ENCODE measurements at regions of chr7 and their contacts with region 1.

Region 1: GRCh38 chr7:86939197-86939814 is 120.1 kb downstream of the ELAPOR2 start:
- DNase-seq: no peak
- CTCF ChIP-seq: peak; percentile 71

Region 2: DNA sequence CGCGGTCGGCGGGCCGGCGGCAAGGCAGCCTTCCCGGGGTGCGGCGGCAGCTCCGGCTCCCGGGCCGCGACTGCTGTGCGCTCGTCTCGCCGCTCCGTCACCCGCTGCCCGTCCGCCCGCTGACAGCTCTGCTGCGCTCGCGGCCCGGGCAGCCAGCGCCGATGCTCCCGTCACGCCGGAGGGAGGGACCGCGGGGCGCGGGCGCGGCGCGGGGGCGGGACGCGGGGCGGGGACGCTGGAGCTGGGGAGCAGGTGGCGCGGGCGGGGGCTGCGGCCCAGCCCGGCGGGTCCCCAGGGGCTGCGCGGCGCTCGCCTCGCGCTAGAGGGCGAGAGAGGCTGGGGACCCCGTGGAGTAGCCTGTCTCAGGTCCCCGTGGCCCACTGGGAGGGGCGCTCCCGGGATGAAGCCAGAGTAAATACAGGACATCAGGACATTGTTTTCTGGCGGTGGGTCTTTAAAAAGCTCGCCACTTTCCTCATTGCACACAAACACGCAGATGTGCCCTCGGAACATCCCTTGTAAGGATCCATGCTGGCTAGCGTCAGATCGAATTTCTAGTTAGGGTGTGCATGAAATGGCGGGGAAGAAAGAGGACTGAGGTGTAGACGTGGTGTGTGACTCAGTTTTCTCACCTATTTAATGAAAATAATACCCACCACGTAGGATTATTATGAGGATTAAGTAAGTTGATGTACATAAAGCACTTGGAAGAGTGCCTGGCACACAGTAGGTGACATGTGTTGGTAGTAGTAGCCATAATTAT is 120.4 kb after region 1 on chr7 and contains the start of gene ELAPOR2:
- in situ Hi-C with region 1: loop called (anchors 10 kb)
- DNase-seq: peak; percentile 91
- CTCF ChIP-seq: peak; percentile 87

Region 3: GRCh38 chr7:87148332-87148955 is 209.1 kb after region 1 on chr7:
- in situ Hi-C with region 1: loop called (anchors 10 kb)
- DNase-seq: peak; percentile 50
- CTCF ChIP-seq: peak; percentile 56

Region 4: DNA sequence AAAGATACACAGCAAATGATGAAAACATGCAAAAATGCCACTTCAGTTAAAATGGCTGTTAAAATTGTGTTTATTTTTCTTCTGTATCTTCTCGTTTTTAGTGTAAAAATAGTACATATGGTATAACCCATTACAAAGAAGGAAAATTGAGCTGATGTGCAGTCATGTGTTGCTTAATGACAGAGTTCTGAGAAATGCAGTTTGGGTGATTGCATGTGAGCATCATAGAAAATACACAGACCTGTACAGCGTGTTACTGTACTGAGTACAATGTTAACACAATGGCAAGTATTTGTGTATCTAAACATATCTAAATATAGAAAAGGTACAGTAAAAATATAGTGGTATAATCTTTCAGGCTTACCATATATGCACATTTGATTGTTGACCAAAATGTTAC is 220.2 kb after region 1 on chr7:
- in situ Hi-C with region 1: no loop called
- DNase-seq: no peak
- CTCF ChIP-seq: no peak

Measured in GM13977 (cell line).